Heart right ventricle (tissue), 16 donors: ENCODE measurements at regions of chr19 and their contacts with region 1.

Region 1: GRCh38 chr19:48738557-48739399 is 1.6 kb downstream of the RASIP1 start:
- DNase-seq: peak; percentile 95 to 97
- ATAC-seq: peak; percentile 82 to 90 (median 86)
- H3K4me3 ChIP-seq: peak overlapping the region; percentile 60 to 84 (median 71)
- H3K27ac ChIP-seq: peak overlapping the region; percentile 81 to 97 (median 94)
- H3K4me1 ChIP-seq: peaks cover 0 to 36% (median 19%) of the 10 kb centered on the region in 9 donors
- H3K27me3 ChIP-seq: peaks cover 0 to 21% (median 0%) of the 10 kb centered on the region in 7 donors
- CTCF ChIP-seq: peak in 8 of 9 donors; percentile 12 to 73 (median 36)

Region 2: DNA sequence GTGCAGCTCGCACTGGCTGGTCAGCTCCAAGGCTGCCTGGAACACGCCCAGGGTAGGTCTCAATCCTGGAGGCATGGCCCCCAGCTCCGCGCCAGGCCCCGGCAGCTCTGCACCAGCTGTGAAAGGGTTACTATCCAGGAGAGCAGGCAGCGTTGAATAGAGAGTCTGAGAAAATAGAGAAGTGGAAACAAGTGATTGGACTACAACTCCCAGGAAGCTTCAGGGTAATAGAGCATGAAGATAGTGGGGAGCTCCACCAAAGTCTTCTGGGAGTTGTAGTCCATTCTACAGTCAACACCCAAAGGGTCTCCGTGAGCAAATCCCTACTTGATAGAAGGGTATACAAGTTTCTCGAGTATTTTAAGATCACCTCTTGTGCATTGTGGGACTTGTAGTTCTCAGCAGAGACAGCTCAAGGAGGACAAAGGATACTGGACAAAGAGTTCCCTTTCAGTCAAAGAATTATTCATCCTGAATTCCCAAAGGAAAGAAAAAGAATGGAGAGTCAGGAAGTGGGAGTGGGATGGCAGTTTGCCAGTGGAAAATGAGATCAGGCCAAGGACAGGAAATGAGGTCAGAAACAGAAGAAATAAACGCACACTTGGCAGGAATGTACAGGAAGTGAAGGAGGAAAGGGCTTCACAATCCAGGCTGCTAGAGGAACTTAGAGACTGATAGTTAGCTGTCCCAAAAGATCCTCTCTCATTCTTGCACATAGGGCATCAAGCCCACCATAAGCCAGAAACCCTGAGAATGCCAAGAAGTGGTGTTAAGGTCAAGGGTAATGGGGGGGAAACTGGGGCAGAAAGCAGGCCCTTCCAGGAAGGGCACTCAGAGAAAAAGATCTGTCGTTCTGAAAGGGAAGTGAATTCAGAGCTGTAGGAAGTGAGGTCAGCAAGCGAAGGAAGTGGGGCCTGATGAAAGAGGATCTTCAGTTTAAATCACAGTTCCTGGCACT is 13.7 kb before region 1 on chr19:
- intact Hi-C with region 1: loop called in 1 of 10 experiments (anchors 2 kb)
- DNase-seq: peak in 1 of 2 donors; percentile 93
- ATAC-seq: peak; percentile 4 to 68 (median 38)
- H3K4me3 ChIP-seq: peak overlapping the region in 2 of 10 donors; percentile 13 to 20
- H3K27ac ChIP-seq: peak overlapping the region; percentile 70 to 96 (median 87)
- H3K4me1 ChIP-seq: peaks cover 10 to 68% (median 37%) of the 10 kb centered on the region in 9 donors
- H3K27me3 ChIP-seq: peaks cover 0 to 5% (median 0%) of the 10 kb centered on the region in 7 donors
- CTCF ChIP-seq: no peak

Region 3: GRCh38 chr19:48780631-48781391 is 42.0 kb after region 1 on chr19:
- intact Hi-C with region 1: loop called in 1 of 10 experiments (anchors 5 kb)
- DNase-seq: no peak
- ATAC-seq: peak in 5 of 8 donors; percentile 3 to 31 (median 16)
- H3K4me3 ChIP-seq: no peak overlapping the region
- H3K27ac ChIP-seq: peak overlapping the region in 8 of 10 donors; percentile 55 to 74 (median 67)
- H3K4me1 ChIP-seq: peaks cover 0 to 35% (median 10%) of the 10 kb centered on the region in 9 donors
- H3K27me3 ChIP-seq: no peaks in the 10 kb centered on the region
- CTCF ChIP-seq: no peak